ENCODE measurements at regions of chr1 and their contacts with region 1.

Region 1: DNA sequence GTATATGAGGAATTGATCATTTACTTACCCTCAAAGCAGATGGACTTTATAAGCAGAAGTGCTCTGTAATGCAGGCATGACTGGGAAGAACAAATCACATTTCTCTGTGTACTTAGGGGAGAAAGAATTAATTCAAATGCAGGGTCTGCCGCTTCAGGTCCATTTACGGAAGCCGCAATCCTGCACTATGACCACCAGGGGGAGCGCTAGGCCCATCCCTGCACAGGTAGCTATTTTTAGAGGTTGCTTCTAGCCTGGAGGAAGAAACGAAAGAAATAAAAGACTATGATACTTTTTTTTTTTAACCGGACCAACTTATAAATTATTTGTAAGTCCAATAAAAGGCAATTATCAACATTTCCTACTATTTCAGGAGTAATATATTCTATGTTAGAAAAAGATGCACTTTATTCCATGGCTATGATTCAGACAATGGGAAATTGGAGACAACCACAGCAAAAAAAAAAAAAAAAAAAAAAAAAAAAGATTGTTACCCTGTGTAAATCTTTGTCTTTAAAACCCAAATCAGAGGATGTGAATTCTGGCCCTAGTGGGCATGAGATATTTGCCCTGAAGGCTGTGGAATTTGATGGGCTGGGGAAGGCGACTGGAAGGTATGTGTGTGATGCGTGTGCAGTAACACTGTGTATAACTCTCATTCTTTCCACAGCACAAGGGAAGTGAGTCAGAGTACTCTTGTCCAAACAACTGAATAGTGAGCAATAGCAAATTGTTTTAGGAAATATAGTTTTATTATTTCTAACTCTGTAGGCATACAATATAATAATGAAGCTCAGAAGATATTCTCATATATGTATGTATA is 12.9 kb upstream of the FYB2 start:
- DNase-seq: peak; percentile 91
- H3K4me3 ChIP-seq: no peak overlapping the region
- CTCF ChIP-seq: peak; percentile 84

Region 2: DNA sequence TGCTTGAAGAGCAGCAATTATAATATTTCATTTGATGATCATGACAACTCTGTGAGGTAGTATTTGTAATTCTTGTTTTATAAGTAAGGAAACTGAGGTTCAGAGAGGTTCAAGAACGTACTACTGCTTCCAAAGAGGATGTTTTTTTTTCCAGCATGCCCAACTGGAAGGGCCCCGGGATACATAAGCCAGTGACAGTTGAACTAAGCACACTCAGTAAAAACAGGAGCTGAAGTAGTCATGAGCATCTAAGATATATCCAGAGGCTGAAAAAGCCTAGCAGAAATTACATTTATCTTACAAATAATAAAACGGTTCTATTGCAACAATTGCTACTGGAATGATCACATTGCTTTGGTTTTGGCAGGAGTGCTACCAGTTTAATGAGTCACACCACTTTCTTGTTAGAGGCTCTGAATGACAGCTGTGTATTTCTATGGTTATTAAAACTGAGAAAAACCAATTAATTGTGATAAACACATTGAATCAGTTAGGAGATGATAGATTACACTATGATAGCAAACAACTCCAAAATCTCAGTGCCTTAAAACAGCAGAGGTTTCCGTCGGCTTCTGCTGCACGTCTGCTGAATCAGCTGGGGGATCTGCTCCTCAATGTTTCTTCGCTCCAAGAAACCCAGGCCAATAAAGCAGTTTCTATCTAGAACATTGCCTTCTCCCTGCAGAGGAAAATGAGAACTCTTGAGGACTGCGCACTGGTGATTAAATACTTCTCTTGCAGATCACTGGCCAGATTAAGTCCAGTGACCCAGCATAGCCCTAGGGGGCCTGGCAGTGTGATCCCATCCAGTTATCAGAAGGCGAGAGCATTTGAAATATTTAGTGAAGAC is 775.4 kb before region 1 on chr1:
- CTCF ChIA-PET with region 1: no interaction called
- POLR2A ChIA-PET with region 1: no interaction called
- DNase-seq: no peak
- H3K4me3 ChIP-seq: no peak overlapping the region
- CTCF ChIP-seq: no peak

Region 3: DNA sequence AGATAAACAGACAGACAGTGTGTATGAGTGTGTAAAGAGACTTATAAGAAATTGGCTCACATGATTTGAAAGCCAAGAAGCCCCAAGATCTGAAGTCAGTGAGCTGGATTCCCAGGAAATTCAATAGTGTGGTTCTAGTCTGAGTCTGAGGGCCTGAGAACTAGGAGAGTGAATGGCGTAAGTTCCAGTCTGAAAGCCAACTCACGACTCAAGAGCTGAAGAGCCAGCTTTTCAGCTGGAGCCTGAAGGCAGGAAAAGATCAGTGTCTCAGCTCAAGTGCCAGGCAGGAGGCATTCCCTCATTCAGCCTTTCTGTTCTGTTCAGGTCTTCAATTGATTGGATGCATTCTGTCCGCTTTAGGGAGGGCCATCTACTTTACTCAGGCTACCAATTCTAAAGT is 509.9 kb before region 1 on chr1:
- CTCF ChIA-PET with region 1: no interaction called
- POLR2A ChIA-PET with region 1: no interaction called
- DNase-seq: no peak
- H3K4me3 ChIP-seq: no peak overlapping the region
- CTCF ChIP-seq: no peak

Region 4: DNA sequence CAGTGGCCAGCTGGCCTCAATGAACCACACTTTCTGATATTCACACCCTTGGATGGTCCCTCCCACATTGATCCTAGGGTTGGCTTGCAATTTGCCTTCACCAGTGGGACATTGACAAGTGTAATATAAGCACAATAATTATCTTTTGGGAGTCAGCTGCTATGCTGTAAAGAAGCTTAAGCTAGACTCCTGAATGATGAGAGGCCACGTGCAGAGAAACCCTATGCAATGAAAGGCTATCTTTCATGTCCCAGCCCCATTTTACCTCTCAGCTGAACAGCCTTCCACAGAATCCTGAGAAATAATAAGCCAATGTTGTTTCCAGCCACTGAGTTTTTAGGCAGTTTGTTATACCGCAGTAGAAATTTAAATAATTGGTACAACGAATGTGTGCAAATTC is 11.5 kb after region 1 on chr1:
- CTCF ChIA-PET with region 1: interaction called, 17 read pairs
- POLR2A ChIA-PET with region 1: no interaction called
- DNase-seq: no peak
- H3K4me3 ChIP-seq: no peak overlapping the region
- CTCF ChIP-seq: no peak

Region 5: DNA sequence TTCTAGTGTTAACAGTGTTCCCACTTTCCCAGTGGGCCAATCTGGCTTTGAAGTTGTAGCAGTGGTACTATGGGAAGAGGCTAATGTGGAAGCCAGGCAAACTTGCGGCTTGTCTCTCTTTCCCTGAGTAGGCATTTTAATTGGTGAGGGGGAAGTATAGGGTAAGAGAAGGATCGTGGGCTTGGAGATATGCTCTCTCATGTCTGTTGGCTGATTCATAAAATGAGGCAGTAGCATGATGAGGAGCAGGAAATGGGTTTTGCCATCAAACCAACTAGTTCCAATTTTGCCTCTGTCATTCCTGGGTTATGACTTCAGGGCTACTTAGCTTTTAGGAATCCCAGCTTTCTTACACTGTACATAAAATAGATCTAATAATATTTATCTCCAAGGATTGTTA is 34.6 kb after region 1 on chr1:
- CTCF ChIA-PET with region 1: interaction called, 12 read pairs
- POLR2A ChIA-PET with region 1: no interaction called
- DNase-seq: peak; percentile 81
- H3K4me3 ChIP-seq: no peak overlapping the region
- CTCF ChIP-seq: no peak

Region 6: GRCh38 chr1:56877973-56878372 is 45.9 kb after region 1 on chr1:
- CTCF ChIA-PET with region 1: no interaction called
- POLR2A ChIA-PET with region 1: no interaction called
- DNase-seq: no peak
- H3K4me3 ChIP-seq: no peak overlapping the region
- CTCF ChIP-seq: no peak

Region 7: GRCh38 chr1:56967900-56968832 is 136.1 kb after region 1 on chr1:
- CTCF ChIA-PET with region 1: interaction called, 21 read pairs
- POLR2A ChIA-PET with region 1: no interaction called
- DNase-seq: no peak
- H3K4me3 ChIP-seq: no peak overlapping the region
- CTCF ChIP-seq: peak; percentile 62

Region 8: GRCh38 chr1:57061369-57061768 is 229.3 kb after region 1 on chr1:
- CTCF ChIA-PET with region 1: interaction called, 20 read pairs
- POLR2A ChIA-PET with region 1: no interaction called
- DNase-seq: no peak
- H3K4me3 ChIP-seq: no peak overlapping the region
- CTCF ChIP-seq: no peak

Region 9: DNA sequence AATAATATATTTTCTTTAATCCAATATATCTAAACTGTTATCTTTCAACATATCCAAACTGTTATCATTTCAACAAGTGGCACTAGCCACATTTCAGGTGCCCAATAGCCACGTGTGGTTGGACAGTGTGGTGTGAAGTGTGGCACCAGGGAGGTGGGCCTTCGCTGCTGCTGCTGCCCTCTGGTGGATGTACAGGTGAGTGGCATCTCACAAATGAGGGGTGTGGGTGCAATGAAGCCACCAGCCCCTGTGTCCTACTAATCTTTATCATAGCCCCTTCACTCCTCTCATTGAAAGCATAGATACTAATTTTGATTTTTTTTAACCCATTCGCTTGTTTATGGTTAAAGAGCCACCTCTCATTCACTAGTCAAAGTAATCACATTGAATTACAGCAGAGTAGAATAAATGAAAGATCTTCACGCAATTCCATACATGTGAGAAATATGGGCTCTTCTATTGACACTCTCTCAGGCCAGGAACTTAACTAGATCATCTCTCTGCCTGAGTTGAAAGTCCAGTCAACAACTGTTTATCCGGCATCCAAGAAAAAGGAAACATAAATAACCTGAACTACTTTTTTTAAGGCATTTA is 1215.3 kb after region 1 on chr1:
- CTCF ChIA-PET with region 1: interaction called, 16 read pairs
- POLR2A ChIA-PET with region 1: no interaction called
- DNase-seq: no peak
- H3K4me3 ChIP-seq: no peak overlapping the region
- CTCF ChIP-seq: peak; percentile 71